Panc1 (cell line): ENCODE measurements at regions of chr4 and their contacts with region 1.

Region 1: DNA sequence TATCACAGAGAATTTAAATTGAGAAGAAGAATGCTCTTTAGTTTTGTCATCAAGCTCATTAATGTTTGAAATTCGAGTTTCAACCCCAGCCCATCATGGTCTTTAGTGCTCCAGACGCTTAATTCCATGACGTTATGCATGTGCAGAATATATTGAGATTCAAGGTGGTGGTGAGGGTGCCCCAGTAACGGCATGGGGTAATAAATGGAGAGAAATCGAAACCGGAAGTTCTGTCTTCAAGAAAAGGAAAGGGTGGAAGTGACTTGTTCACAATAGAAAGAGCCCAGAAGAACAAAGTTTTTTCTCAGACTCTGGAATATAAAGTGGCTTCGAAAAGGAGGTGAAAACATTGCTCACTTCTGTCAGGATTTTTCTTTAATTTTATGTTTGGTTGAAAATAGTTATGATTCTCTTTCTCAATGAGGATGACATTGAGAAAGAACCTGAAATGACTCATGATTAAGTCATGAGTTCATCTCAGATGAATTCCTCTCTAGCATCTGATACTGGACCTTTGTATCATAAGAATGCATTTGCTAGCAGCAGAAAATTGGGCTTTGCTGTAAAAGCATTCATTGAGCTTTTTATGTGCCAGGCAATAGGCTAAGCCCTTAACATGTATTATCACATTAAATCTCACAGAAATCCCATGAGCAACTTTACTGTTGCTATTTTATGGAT is 779 bp upstream of the DDX60L start:
- DNase-seq: peak; percentile 79
- ATAC-seq: peak; percentile 71
- H3K4me3 ChIP-seq: peak overlapping the region; percentile 64 to 67
- H3K27ac ChIP-seq: peak overlapping the region; percentile 88
- H3K4me1 ChIP-seq: no peaks in the 10 kb centered on the region; the same call in 1 of the 2 replicates
- H3K27me3 ChIP-seq: no peaks in the 10 kb centered on the region
- CTCF ChIP-seq: no peak

Region 2: GRCh38 chr4:168514249-168514852 is 33.3 kb after region 1 on chr4:
- CTCF ChIA-PET with region 1: no interaction called
- POLR2A ChIA-PET with region 1: no interaction called
- in situ Hi-C with region 1: no loop called
- intact Hi-C with region 1: no loop called
- DNase-seq: no peak
- ATAC-seq: no peak
- H3K4me3 ChIP-seq: no peak overlapping the region
- H3K27ac ChIP-seq: no peak overlapping the region
- H3K4me1 ChIP-seq: no peaks in the 10 kb centered on the region
- H3K27me3 ChIP-seq: no peaks in the 10 kb centered on the region
- CTCF ChIP-seq: peak; percentile 44; the same call in 1 of the 2 replicates

Region 3: DNA sequence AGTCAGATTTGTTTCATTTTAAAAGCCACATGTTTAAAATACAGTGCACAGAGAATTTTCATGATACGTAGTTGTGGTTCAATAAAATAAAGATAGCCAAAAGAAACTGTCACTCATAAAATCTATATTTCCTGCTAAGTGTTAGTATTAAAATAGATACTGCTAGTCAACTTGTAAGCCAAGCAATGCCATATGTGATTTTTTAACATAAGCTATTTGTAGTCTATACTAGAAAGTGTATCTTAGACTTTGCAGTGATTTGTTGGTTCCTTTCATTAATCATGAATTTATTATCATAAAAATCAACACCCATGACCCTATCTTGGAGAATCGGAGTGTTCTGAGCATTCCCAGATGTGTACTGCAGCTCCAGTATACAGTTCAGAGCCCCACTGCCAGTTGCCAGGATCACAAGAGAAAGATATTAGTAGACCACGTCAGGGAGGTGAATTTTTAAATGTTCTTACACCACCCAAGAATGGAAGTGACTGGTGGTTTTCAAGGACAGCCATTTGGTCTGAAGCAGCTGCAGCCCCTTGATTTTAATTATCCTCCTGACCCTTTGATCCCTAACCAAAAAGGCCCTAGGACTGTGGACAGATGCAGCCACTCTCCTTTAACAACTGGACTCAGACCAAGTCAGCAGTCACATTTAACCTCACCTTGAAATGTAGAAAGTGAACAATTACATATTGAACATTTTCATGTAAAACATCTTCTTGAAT is 178.8 kb after region 1 on chr4:
- CTCF ChIA-PET with region 1: no interaction called
- POLR2A ChIA-PET with region 1: interaction called, 11 read pairs
- in situ Hi-C with region 1: no loop called
- intact Hi-C with region 1: no loop called
- DNase-seq: no peak
- ATAC-seq: no peak
- H3K4me3 ChIP-seq: no peak overlapping the region
- H3K27ac ChIP-seq: no peak overlapping the region
- H3K4me1 ChIP-seq: no peaks in the 10 kb centered on the region
- H3K27me3 ChIP-seq: no peaks in the 10 kb centered on the region
- CTCF ChIP-seq: no peak

Region 4: GRCh38 chr4:169062897-169063244 is 581.8 kb after region 1 on chr4:
- CTCF ChIA-PET with region 1: no interaction called
- POLR2A ChIA-PET with region 1: interaction called, 11 read pairs
- in situ Hi-C with region 1: no loop called
- intact Hi-C with region 1: no loop called
- DNase-seq: no peak
- ATAC-seq: peak; percentile 39; the same call in 1 of the 2 replicates
- H3K4me3 ChIP-seq: no peak overlapping the region
- H3K27ac ChIP-seq: peak overlapping the region; percentile 21; the same call in 1 of the 2 replicates
- H3K4me1 ChIP-seq: peaks cover 6% of the 10 kb centered on the region; the same call in 1 of the 2 replicates
- H3K27me3 ChIP-seq: no peaks in the 10 kb centered on the region
- CTCF ChIP-seq: no peak